Activated CD4-positive, alpha-beta memory T cell treated with anti-CD3 and anti-CD28 coated beads for 36 hours (primary cell): ENCODE measurements at regions of chr3 and their contacts with region 1.

Region 1: GRCh38 chr3:119352849-119353502 is 58.8 kb downstream of the ARHGAP31 start:
- DNase-seq: no peak
- H3K4me3 Mint-ChIP-seq: no peak overlapping the region
- H3K27ac Mint-ChIP-seq: no peak overlapping the region
- H3K4me1 Mint-ChIP-seq: peaks cover 30% of the 10 kb centered on the region
- H3K27me3 Mint-ChIP-seq: no peaks in the 10 kb centered on the region

Region 2: GRCh38 chr3:119125742-119126503 is 227.1 kb before region 1 on chr3:
- CTCF ChIA-PET with region 1: no interaction called
- POLR2A ChIA-PET with region 1: no interaction called
- intact Hi-C with region 1: no loop called
- DNase-seq: no peak
- H3K4me3 Mint-ChIP-seq: no peak overlapping the region
- H3K27ac Mint-ChIP-seq: no peak overlapping the region
- H3K4me1 Mint-ChIP-seq: no peaks in the 10 kb centered on the region
- H3K27me3 Mint-ChIP-seq: peaks cover 11% of the 10 kb centered on the region

Region 3: DNA sequence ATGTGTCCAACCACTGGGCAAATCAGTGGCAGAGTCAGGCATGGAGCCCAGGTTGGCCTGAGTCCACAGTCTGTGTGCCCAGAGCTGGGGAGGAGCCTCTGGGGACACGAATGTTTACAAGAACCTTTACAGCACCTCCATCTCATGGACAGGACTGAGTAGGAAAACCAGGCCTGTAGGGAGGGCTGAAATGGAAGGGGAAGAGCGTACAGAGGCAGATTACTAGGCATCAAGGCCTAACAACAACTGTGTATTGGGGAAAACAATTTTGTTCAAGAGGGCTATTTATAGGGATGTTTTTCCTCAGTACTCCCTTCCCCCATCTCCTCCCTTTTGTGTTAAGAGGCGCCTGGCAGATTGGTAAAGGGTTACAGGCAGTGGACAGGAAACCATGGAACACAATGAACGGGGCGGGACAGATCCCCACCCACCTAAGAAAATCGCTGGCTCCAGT is 73.8 kb before region 1 on chr3:
- CTCF ChIA-PET with region 1: interaction called, 16 read pairs
- POLR2A ChIA-PET with region 1: interaction called, 3 read pairs
- intact Hi-C with region 1: loop called (anchors 1 kb)
- DNase-seq: no peak
- H3K4me3 Mint-ChIP-seq: no peak overlapping the region
- H3K27ac Mint-ChIP-seq: no peak overlapping the region
- H3K4me1 Mint-ChIP-seq: peaks cover 7% of the 10 kb centered on the region
- H3K27me3 Mint-ChIP-seq: no peaks in the 10 kb centered on the region

Region 4: DNA sequence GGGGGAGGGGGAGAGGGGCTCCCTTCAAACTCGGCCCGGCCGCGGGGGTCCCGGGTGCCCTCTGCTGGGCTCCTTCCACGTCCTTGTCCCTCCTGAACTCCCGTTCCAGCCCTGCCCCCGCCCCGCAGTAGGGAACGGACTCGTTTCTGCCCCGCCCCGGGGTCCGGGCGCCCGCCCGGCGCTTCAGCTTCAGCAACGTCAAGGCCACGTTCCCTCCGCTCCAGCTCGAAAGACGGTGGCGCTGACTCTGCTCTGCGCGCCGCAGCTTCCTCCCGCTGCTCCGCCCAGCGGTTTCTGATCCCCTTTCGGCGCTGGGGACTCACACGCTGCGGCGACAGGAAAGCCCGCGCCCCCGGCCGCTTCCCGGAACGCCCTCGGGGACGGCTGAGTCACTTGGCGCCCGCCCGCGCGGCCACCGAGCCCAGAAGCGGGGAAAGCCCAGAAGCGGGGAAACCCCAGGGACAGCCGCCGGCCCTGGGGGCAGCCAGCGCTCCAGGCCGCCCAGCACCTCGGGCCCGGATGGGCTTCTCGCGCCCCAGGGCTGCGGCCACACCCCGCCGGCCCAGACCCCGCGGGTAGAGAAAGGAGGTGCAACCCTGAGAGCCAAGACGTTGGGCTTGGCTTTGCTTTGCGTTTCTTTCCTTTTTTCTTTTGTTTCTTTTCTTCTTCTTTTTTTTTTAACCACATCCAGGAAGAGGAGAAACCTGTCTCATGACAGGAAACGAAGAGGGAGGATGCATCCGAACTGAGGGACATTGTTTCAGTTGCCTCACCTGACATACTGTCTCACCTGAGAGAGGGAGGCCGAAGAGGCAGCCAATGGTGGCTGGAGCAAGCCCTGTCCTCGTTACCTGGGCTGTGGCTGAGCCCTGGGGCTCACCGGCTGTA is 29.9 kb before region 1 on chr3:
- CTCF ChIA-PET with region 1: no interaction called
- POLR2A ChIA-PET with region 1: interaction called, 3 read pairs
- intact Hi-C with region 1: loop called (anchors 1 kb)
- DNase-seq: peak; percentile 97
- H3K4me3 Mint-ChIP-seq: peak overlapping the region; percentile 82
- H3K27ac Mint-ChIP-seq: peak overlapping the region; percentile 95
- H3K4me1 Mint-ChIP-seq: peaks cover 41% of the 10 kb centered on the region
- H3K27me3 Mint-ChIP-seq: no peaks in the 10 kb centered on the region